Activated CD4-positive, alpha-beta T cell treated with anti-CD3 and anti-CD28 coated beads for 36 hours (primary cell): ENCODE measurements at regions of chr10 and their contacts with region 1.

Region 1: GRCh38 chr10:24617771-24618391 is 105.8 kb downstream of the ARHGAP21 start:
- DNase-seq: peak; percentile 72
- ATAC-seq: peak; percentile 45
- H3K4me3 Mint-ChIP-seq: peak overlapping the region; percentile 57
- H3K27ac Mint-ChIP-seq: peak overlapping the region; percentile 68
- H3K4me1 Mint-ChIP-seq: peaks cover 43% of the 10 kb centered on the region
- H3K27me3 Mint-ChIP-seq: no peaks in the 10 kb centered on the region

Region 2: DNA sequence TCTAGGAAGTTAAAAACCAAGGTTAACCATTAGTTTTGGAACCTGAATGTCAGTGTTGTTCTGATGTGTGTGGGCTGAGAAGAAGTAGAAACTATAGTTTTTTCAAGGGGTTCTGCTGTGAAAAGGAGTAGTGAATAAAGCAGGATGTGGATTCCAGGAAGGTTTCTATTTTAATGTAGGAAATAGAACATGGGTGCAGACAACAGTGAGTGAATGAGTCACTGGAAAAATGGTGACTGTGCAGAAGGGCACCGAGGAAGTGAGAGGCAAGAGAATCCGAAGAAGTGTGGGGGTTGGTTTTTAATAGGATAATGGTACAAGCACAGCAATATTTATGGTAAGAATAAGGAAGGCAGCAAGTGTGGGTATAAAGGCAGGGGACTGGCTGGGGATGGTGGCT is 14.5 kb before region 1 on chr10:
- CTCF ChIA-PET with region 1: interaction called, 19 read pairs
- POLR2A ChIA-PET with region 1: no interaction called
- intact Hi-C with region 1: no loop called
- DNase-seq: peak; percentile 47
- ATAC-seq: peak; percentile 97
- H3K4me3 Mint-ChIP-seq: peak overlapping the region; percentile 25
- H3K27ac Mint-ChIP-seq: peak overlapping the region; percentile 91
- H3K4me1 Mint-ChIP-seq: peaks cover 26% of the 10 kb centered on the region
- H3K27me3 Mint-ChIP-seq: no peaks in the 10 kb centered on the region

Region 3: DNA sequence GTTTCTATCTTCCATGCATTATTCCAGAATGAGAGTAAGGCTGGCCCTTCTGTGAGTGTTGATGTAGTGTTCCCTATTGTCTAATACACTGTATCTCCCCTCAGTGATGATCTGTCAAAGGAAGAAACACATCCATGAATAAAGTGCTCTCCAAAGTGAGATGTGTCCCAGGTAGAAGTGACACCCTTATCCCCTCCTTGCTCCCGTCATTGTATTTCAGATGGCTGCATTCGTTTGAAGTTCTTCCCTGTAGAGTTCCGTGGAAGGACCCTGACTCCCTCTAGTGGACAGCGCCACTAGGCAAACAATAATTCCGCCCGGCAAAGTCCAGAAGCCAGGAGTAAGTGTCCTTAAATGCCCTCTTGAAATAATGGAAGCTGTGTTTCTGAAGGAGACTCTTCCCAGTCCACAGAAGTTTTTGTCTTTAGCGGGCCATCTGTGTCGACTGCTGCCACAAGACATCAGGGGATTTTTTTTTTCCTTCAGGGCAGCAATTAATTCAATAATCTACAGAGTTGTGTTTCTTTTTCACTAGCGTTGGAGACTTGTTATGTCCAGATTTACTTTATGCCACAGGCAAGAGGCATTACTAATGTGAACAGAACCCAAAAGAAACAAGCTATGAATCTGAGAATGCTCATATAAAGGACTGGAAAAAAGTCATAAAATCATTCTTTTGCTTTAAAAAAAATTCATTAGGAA is 463.1 kb after region 1 on chr10:
- CTCF ChIA-PET with region 1: interaction called, 12 read pairs
- POLR2A ChIA-PET with region 1: no interaction called
- intact Hi-C with region 1: loop called (anchors 1 to 5 kb)
- DNase-seq: peak; percentile 77
- ATAC-seq: peak; percentile 65
- H3K4me3 Mint-ChIP-seq: no peak overlapping the region
- H3K27ac Mint-ChIP-seq: no peak overlapping the region
- H3K4me1 Mint-ChIP-seq: peaks cover 6% of the 10 kb centered on the region
- H3K27me3 Mint-ChIP-seq: peaks cover 3% of the 10 kb centered on the region